ENCODE measurements at regions of chr7 and their contacts with region 1.

Region 1: GRCh38 chr7:5450549-5451372 is 27.1 kb upstream of the TNRC18 start:
- DNase-seq: no peak
- ATAC-seq: peak; percentile 92
- H3K4me3 ChIP-seq: no peak overlapping the region
- H3K27ac ChIP-seq: no peak overlapping the region
- H3K4me1 ChIP-seq: no peaks in the 10 kb centered on the region
- H3K27me3 ChIP-seq: no peaks in the 10 kb centered on the region; a peak in 1 of 4 replicates
- CTCF ChIP-seq: peak; percentile 48 to 70 (median 61)
- EP300 ChIP-seq: no peak
- POLR2A ChIP-seq: no peak
- RAD21 ChIP-seq: peak; percentile 74

Region 2: DNA sequence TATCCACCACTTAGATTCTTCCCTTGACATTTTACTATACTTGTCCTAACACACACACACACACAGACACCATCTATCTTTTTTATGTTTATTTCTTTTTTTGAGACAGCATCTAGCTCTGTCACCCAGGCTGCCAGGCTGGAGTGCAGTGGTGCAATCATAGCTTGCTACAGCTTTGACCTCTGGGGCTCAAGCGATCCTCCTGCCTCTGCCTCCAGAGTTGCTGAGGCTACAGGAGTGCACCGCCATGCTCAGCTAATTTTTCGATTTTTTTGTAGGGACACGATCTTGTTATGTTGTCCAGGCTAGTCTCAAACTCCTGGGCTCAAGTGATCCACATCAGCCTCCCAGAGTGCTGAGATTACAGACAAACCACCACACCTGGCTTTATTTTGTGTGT is 244.1 kb before region 1 on chr7:
- CTCF ChIA-PET with region 1: interaction called, 11 read pairs
- POLR2A ChIA-PET with region 1: no interaction called
- RAD21 ChIA-PET with region 1: no interaction called
- SMC1A ChIA-PET with region 1: no interaction called
- in situ Hi-C with region 1: no loop called
- intact Hi-C with region 1: no loop called
- DNase-seq: no peak
- ATAC-seq: peak; percentile 15; the same call in 1 of the 3 replicates
- H3K4me3 ChIP-seq: no peak overlapping the region
- H3K27ac ChIP-seq: no peak overlapping the region; the same call in 1 of the 2 replicates
- H3K4me1 ChIP-seq: no peaks in the 10 kb centered on the region
- H3K27me3 ChIP-seq: no peaks in the 10 kb centered on the region
- CTCF ChIP-seq: no peak
- EP300 ChIP-seq: no peak
- POLR2A ChIP-seq: no peak
- RAD21 ChIP-seq: no peak

Region 3: DNA sequence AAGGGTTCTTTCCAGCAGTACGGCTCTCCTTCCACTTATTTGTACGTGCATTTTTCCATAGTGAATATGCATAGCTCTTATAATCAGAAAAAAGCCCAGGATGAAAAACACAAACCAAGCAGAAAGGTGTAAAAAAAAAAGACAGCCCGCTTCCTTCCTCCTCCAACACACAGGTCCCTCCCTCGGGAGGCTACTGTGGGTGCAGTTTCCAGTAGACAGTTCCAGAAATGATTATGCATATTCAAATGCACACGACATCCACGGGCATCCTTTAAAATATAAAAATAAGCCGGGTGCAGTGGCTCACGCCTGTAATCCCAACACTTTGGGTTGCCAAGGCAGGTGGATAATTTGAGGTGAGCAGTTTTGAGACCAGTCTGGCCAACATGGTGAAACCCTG is 87.0 kb before region 1 on chr7:
- CTCF ChIA-PET with region 1: interaction called, 60 read pairs
- POLR2A ChIA-PET with region 1: no interaction called
- RAD21 ChIA-PET with region 1: interaction called, 45 read pairs
- SMC1A ChIA-PET with region 1: interaction called, 32 read pairs
- in situ Hi-C with region 1: no loop called
- intact Hi-C with region 1: loop called (anchors 1 kb)
- DNase-seq: no peak
- ATAC-seq: peak; percentile 38; the same call in 2 of the 3 replicates
- H3K4me3 ChIP-seq: peak overlapping the region; percentile 16; the same call in 1 of the 2 replicates
- H3K27ac ChIP-seq: no peak overlapping the region
- H3K4me1 ChIP-seq: peaks cover 16% of the 10 kb centered on the region
- H3K27me3 ChIP-seq: no peaks in the 10 kb centered on the region
- CTCF ChIP-seq: no peak
- EP300 ChIP-seq: no peak
- POLR2A ChIP-seq: no peak
- RAD21 ChIP-seq: no peak

Region 4: GRCh38 chr7:5435289-5436002 is 15.3 kb before region 1 on chr7:
- CTCF ChIA-PET with region 1: interaction called, 12 read pairs
- POLR2A ChIA-PET with region 1: no interaction called
- RAD21 ChIA-PET with region 1: interaction called, 13 read pairs
- SMC1A ChIA-PET with region 1: interaction called, 10 read pairs
- in situ Hi-C with region 1: no loop called
- intact Hi-C with region 1: no loop called
- DNase-seq: peak; percentile 41
- ATAC-seq: peak; percentile 91
- H3K4me3 ChIP-seq: no peak overlapping the region
- H3K27ac ChIP-seq: no peak overlapping the region
- H3K4me1 ChIP-seq: peaks cover 10% of the 10 kb centered on the region
- H3K27me3 ChIP-seq: peaks cover 4 to 5% of the 10 kb centered on the region in 2 experiments; a peak in 3 of 4 replicates
- CTCF ChIP-seq: no peak
- EP300 ChIP-seq: peak in 1 of 2 experiments; percentile 45; a peak in 1 of 4 replicates
- POLR2A ChIP-seq: no peak
- RAD21 ChIP-seq: no peak

Region 5: GRCh38 chr7:5507013-5507412 is 56.3 kb after region 1 on chr7:
- CTCF ChIA-PET with region 1: no interaction called
- POLR2A ChIA-PET with region 1: no interaction called
- RAD21 ChIA-PET with region 1: no interaction called
- SMC1A ChIA-PET with region 1: no interaction called
- in situ Hi-C with region 1: no loop called
- intact Hi-C with region 1: no loop called
- DNase-seq: no peak
- ATAC-seq: no peak
- H3K4me3 ChIP-seq: no peak overlapping the region
- H3K27ac ChIP-seq: no peak overlapping the region
- H3K4me1 ChIP-seq: peaks cover 3% of the 10 kb centered on the region; the same call in 1 of the 2 replicates
- H3K27me3 ChIP-seq: no peaks in the 10 kb centered on the region
- CTCF ChIP-seq: no peak
- EP300 ChIP-seq: no peak
- POLR2A ChIP-seq: no peak
- RAD21 ChIP-seq: no peak

Region 6: DNA sequence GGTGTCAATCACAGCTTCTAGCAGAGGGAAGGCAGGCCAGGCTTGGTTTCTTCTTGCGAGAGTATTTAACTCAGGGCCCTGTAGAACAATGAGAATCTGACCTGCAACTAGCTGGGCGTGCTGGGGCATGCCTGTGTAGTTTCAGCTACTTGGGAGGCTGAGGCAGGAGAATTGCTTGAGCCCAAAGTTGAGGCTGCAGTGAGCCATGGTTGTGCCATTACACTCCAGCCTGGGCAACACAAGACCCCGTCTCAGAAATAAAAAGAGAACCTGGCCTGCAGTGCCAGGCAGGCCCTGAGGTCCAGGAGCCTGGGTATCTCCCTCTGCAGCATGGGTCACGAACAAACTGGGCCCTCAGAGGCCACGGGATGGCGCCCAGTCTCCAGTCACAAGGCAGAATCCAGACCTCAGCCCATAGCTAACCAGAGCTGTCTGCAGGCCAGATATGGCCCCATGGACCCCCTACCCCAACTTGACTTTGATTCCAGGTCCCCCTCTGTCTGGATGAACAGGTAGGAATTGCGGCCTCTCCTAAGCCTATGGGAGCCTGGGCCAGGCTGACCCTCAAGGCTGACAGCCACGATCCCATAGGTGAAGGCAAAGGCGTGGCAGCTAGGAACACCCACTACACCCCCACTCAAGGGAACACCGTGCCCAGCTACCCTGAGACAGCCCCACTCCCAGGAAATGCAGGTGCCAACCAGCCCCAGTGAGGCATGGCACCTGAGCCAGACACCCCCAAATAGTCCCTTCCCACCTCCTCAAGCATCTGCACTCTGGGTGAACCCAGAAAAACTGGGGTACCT is 75.5 kb after region 1 on chr7:
- CTCF ChIA-PET with region 1: no interaction called
- POLR2A ChIA-PET with region 1: no interaction called
- RAD21 ChIA-PET with region 1: no interaction called
- SMC1A ChIA-PET with region 1: no interaction called
- in situ Hi-C with region 1: no loop called
- intact Hi-C with region 1: no loop called
- DNase-seq: no peak
- ATAC-seq: peak; percentile 4
- H3K4me3 ChIP-seq: peak overlapping the region; percentile 99; the same call in 1 of the 2 replicates
- H3K27ac ChIP-seq: peak overlapping the region; percentile 3
- H3K4me1 ChIP-seq: peaks cover 5% of the 10 kb centered on the region
- H3K27me3 ChIP-seq: no peaks in the 10 kb centered on the region
- CTCF ChIP-seq: peak in 1 of 3 experiments; percentile 31; a peak in 2 of 6 replicates
- EP300 ChIP-seq: no peak
- POLR2A ChIP-seq: no peak
- RAD21 ChIP-seq: 0 out of 2 replicates have a peak, but pooled peaks have one; percentile 1